ENCODE measurements at regions of chr5 and their contacts with region 1.

Region 1: DNA sequence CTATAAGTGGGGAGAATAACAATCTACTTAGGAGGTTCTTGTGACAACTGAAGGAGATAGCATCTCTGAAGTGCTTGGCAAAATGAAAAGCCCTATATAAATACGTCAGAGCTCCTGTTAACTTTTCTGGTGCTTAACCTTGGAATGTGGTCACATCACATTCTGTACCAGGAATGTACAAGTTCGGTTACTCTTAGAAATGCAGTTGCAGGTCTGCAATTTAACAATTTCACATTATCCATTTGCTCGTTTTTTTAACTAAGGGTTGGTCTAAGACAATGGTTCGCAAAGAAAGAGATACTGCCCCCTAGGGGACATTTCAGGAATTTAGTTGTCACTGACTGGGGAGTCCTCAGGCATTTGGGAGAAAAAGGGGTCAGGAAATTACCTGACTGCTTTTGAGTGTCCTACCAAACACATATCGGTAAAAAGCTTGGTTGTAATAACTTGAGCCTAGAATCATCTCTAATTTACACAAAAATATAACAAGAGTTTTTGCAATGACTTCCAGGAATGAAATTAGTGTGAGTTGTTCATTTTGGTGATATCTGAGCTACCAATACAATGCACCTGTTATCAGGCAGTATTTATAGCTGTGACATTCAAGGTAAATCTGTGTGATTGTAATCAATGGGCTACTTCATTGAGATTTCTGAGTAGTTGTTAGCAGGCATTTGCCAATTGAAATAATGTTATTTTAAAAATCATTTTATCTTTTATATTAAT is 5.4 kb upstream of the HBEGF start:
- DNase-seq: peak in 2 of 10 donors; percentile 25 to 48

Region 2: GRCh38 chr5:140244525-140245025 is 107.2 kb before region 1 on chr5:
- intact Hi-C with region 1: loop called (anchors 1 kb)
- DNase-seq: peak; percentile 89 to 99 (median 94)

Region 3: DNA sequence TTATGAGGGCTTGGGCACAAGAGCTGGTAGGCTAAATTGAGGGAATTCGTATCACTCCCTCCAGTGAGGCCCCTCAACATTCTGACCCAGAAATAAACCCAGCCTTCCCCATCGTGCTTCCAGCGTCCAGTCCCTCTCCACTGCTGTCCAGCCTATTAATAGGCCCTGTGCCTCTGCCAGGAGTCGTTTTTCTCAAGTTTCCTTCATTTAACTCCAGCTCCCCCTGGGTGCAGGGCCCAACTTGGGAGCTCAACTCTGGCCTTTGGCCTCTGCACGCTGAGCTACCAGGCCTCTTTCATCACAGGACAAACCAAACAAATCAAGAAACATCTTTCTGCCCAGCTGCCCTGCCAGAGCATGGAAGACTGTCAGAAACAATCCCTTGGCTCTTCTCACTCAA is 15.4 kb before region 1 on chr5:
- intact Hi-C with region 1: no loop called
- DNase-seq: no peak